ENCODE measurements at regions of chr17 and their contacts with region 1.

Region 1: GRCh38 chr17:32659419-32659842 is 172.6 kb downstream of the CDK5R1 start:
- DNase-seq: peak; percentile 40
- ATAC-seq: peak; percentile 87
- H3K4me3 ChIP-seq: no peak overlapping the region
- H3K27ac ChIP-seq: no peak overlapping the region
- H3K4me1 ChIP-seq: no peaks in the 10 kb centered on the region
- H3K27me3 ChIP-seq: no peaks in the 10 kb centered on the region
- CTCF ChIP-seq: peak; percentile 85 to 97 (median 94)
- EP300 ChIP-seq: no peak
- POLR2A ChIP-seq: no peak
- RAD21 ChIP-seq: peak; percentile 61

Region 2: DNA sequence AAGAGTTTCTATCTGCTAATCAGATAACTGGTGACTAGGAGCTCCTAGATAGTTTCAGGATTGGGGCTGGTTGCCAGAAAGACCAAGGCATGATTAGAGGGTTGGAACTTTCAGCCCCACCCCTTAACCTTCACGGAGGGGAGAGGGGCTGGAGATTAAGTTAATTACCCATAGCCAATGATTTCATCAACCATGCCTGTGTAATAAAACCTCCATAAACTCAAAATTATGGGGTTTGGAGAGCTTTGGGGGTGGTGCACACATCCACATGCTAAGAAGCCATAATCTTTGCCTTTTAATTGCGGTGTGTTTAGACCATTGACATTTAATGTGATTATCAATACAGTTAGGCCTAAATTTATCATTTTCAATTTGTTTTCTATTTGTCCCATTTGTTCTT is 11.0 kb before region 1 on chr17:
- CTCF ChIA-PET with region 1: interaction called, 18 read pairs
- POLR2A ChIA-PET with region 1: no interaction called
- RAD21 ChIA-PET with region 1: interaction called, 3 read pairs
- SMC1A ChIA-PET with region 1: interaction called, 3 read pairs
- in situ Hi-C with region 1: no loop called
- intact Hi-C with region 1: no loop called
- DNase-seq: no peak
- ATAC-seq: no peak
- H3K4me3 ChIP-seq: no peak overlapping the region
- H3K27ac ChIP-seq: no peak overlapping the region
- H3K4me1 ChIP-seq: no peaks in the 10 kb centered on the region
- H3K27me3 ChIP-seq: no peaks in the 10 kb centered on the region
- CTCF ChIP-seq: no peak
- EP300 ChIP-seq: no peak
- POLR2A ChIP-seq: no peak
- RAD21 ChIP-seq: no peak

Region 3: GRCh38 chr17:32671896-32672295 is 12.5 kb after region 1 on chr17:
- CTCF ChIA-PET with region 1: interaction called, 17 read pairs
- POLR2A ChIA-PET with region 1: no interaction called
- RAD21 ChIA-PET with region 1: no interaction called
- SMC1A ChIA-PET with region 1: interaction called, 5 read pairs
- in situ Hi-C with region 1: no loop called
- intact Hi-C with region 1: no loop called
- DNase-seq: no peak
- ATAC-seq: no peak
- H3K4me3 ChIP-seq: no peak overlapping the region
- H3K27ac ChIP-seq: no peak overlapping the region
- H3K4me1 ChIP-seq: no peaks in the 10 kb centered on the region
- H3K27me3 ChIP-seq: no peaks in the 10 kb centered on the region
- CTCF ChIP-seq: no peak
- EP300 ChIP-seq: no peak
- POLR2A ChIP-seq: no peak
- RAD21 ChIP-seq: no peak

Region 4: DNA sequence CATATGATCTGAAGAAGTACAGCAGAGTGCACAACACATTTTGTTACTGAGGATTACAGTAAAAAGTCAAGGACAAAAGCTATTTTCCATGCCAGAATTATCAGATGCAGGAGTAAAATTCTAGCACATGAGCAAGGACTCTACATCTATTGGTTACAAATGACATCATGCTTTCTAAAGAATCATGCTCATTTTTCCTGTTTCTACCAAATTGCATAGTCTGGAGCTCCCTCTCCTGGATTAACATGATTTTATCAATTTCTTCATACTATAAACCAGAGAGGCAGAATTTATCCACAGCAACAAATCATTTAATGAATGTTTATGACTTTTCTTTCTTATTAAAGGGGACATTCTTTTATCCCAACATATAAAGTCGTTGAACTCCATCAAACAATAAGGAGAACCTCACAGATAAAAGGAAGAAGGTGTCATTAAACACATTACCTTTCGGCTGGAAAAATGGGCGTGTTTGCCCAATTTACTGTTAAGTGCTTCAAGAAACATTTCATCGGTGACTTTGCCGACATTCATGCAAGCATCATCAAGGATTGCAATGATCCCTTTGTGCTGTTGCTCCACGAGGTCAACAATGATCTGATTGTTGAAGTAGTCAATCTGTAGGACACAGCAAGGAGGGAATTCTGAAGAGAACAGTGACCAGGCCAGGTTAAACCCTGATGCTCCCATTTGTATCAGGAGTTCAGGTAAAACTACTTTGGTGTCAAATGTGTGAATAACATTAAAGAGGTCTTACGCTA is 95.8 kb after region 1 on chr17:
- CTCF ChIA-PET with region 1: interaction called, 8 read pairs
- POLR2A ChIA-PET with region 1: no interaction called
- RAD21 ChIA-PET with region 1: no interaction called
- SMC1A ChIA-PET with region 1: interaction called, 3 read pairs
- in situ Hi-C with region 1: no loop called
- intact Hi-C with region 1: loop called (anchors 2 kb)
- DNase-seq: no peak
- ATAC-seq: peak; percentile 73
- H3K4me3 ChIP-seq: no peak overlapping the region
- H3K27ac ChIP-seq: no peak overlapping the region
- H3K4me1 ChIP-seq: no peaks in the 10 kb centered on the region
- H3K27me3 ChIP-seq: no peaks in the 10 kb centered on the region
- CTCF ChIP-seq: peak in 2 of 3 experiments; percentile 19 to 56; a peak in 4 of 6 replicates
- EP300 ChIP-seq: no peak
- POLR2A ChIP-seq: no peak
- RAD21 ChIP-seq: peak; percentile 83

Region 5: DNA sequence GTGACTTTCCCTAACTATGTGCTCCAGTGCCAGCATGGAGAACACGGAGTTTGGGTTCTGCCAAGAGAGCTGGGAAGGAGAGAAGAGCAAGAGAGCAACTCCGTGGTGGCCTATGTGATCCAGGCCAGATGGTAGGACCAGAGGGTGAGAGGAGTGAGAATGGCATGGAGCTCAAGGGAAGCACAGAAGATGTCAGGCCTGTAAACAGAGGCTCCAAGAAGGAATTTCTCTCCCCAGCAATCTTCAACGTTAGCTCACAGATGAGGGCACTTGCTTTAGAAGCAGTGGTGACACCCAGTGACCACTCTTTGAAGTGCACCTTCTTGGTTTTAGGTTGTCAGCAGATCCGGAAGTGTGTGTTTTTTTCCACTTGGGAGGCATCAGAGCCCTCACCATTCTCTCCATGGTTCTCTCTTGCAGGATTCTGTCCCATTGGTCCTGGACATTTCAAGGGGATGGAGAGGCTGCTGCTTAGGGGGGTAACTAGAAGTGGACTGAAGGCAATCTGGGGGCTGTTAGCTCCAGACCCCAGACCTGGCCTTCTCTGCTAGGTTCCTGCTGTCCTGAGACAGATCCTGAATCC is 250.4 kb after region 1 on chr17:
- CTCF ChIA-PET with region 1: interaction called, 13 read pairs
- POLR2A ChIA-PET with region 1: no interaction called
- RAD21 ChIA-PET with region 1: interaction called, 7 read pairs
- SMC1A ChIA-PET with region 1: interaction called, 5 read pairs
- in situ Hi-C with region 1: no loop called
- intact Hi-C with region 1: no loop called
- DNase-seq: peak; percentile 46
- ATAC-seq: peak; percentile 97
- H3K4me3 ChIP-seq: no peak overlapping the region
- H3K27ac ChIP-seq: no peak overlapping the region
- H3K4me1 ChIP-seq: no peaks in the 10 kb centered on the region
- H3K27me3 ChIP-seq: no peaks in the 10 kb centered on the region
- CTCF ChIP-seq: peak; percentile 85 to 94 (median 91)
- EP300 ChIP-seq: no peak
- POLR2A ChIP-seq: no peak
- RAD21 ChIP-seq: peak; percentile 87

Region 6: GRCh38 chr17:32936894-32937500 is 277.6 kb after region 1 on chr17:
- CTCF ChIA-PET with region 1: interaction called, 19 read pairs
- POLR2A ChIA-PET with region 1: no interaction called
- RAD21 ChIA-PET with region 1: no interaction called
- SMC1A ChIA-PET with region 1: interaction called, 11 read pairs
- in situ Hi-C with region 1: no loop called
- intact Hi-C with region 1: loop called (anchors 2 kb)
- DNase-seq: no peak
- ATAC-seq: peak; percentile 97
- H3K4me3 ChIP-seq: no peak overlapping the region
- H3K27ac ChIP-seq: no peak overlapping the region
- H3K4me1 ChIP-seq: no peaks in the 10 kb centered on the region
- H3K27me3 ChIP-seq: no peaks in the 10 kb centered on the region; a peak in 1 of 4 replicates
- CTCF ChIP-seq: peak; percentile 84 to 89 (median 86)
- EP300 ChIP-seq: no peak
- POLR2A ChIP-seq: no peak
- RAD21 ChIP-seq: peak; percentile 68

Region 7: DNA sequence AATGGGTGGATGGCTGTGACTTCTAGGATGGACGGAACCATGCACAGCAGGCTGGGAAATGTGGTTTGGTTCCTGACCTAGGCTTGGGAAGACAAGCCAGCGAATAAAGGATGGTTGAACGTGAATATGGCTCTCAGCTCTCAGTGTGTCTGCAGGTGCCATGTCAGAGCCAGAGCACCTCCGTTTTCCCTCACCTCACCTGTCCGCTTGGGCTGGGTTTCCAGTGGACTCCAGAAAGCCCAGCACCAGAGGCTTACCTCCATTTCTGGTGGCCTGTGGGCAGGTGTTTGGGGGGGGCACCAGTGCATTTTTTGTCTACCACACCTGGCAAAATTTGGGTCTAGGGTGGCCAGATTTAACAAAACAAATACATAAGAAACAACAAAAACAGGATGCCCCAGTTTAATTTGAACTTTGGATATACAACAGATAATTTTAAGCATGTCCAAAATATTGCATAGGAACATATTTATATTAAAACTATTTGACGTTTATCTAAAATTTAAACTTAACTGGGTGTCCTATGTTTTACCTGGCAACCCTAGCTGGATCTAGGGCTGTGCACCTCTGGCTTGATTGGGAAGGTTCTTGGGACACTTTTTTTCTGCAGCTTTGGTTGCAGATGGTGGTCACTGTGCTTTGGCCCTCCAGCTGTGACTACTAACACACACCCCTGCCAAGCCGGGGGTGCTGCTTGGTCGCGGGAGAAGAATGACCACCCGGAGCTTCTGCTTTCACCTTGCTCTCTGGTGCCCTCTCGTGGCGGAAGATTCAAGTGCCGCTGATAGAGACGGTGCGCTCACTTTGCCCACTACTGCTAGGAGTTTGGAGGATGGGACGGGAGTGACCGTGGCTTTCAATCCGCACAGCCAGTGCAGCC is 338.6 kb after region 1 on chr17:
- CTCF ChIA-PET with region 1: interaction called, 16 read pairs
- POLR2A ChIA-PET with region 1: no interaction called
- RAD21 ChIA-PET with region 1: interaction called, 3 read pairs
- SMC1A ChIA-PET with region 1: no interaction called
- in situ Hi-C with region 1: no loop called
- intact Hi-C with region 1: no loop called
- DNase-seq: no peak
- ATAC-seq: peak; percentile 92
- H3K4me3 ChIP-seq: no peak overlapping the region
- H3K27ac ChIP-seq: no peak overlapping the region
- H3K4me1 ChIP-seq: peaks cover 13% of the 10 kb centered on the region
- H3K27me3 ChIP-seq: no peaks in the 10 kb centered on the region; a peak in 1 of 4 replicates
- CTCF ChIP-seq: peak; percentile 78 to 91 (median 84)
- EP300 ChIP-seq: no peak
- POLR2A ChIP-seq: no peak
- RAD21 ChIP-seq: peak; percentile 66